H1 (cell line): ENCODE measurements at regions of chr3 and their contacts with region 1.

Region 1: DNA sequence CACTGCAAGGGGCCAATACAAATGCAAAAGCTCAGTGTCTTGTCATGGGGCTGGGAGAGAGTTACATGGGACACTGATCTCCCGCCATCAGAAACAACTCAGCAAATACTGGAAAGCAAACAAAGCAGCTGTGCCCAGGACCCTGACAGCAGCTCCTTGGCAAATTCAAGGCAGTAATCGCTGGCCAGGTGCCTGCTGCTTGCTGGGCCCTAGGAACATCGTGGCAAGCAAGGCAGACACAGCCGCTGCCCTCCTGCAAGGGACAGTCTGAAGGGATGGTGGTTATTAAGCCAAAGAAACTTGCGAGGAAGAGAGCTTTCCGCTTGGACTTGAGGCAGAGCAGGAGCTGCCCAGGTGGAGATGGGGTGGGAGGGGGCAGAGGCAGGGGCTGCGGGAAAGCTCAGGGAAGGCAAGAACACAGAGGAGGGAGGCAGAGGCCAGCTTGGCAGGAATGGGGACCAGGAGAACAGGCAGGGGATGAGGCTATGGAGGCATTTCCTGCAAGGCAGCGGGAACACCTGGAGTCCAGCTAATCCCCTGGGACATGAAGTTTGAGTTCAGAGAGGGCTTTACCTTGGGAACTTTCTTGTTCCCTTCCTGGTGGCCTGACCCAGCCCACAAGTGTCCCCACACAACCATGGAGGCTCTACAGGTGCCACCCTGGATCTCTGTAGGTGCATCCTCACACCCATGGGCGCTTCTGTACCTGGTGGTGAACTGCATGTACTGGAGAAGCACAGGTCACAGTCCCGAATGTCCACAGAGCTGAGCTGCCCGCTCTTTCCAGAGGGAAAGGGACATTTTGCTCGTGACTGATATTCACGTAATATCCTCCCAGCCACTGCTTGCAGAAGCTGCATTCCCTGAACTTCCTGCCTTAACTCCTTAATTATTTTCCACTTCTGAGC is 78.7 kb upstream of the ATP2B2 start:
- DNase-seq: no peak
- H3K4me3 ChIP-seq: no peak overlapping the region
- H3K27ac ChIP-seq: no peak overlapping the region
- H3K4me1 ChIP-seq: no peaks in the 10 kb centered on the region; a peak in 1 of 7 replicates
- H3K27me3 ChIP-seq: no peaks in the 10 kb centered on the region
- CTCF ChIP-seq: no peak
- EP300 ChIP-seq: no peak
- POLR2A ChIP-seq: no peak
- RAD21 ChIP-seq: no peak

Region 2: GRCh38 chr3:10594921-10595320 is 10.9 kb after region 1 on chr3:
- CTCF ChIA-PET with region 1: interaction called, 20 read pairs
- POLR2A ChIA-PET with region 1: no interaction called
- DNase-seq: peak; percentile 57 to 89
- H3K4me3 ChIP-seq: no peak overlapping the region
- H3K27ac ChIP-seq: no peak overlapping the region
- H3K4me1 ChIP-seq: no peaks in the 10 kb centered on the region
- H3K27me3 ChIP-seq: no peaks in the 10 kb centered on the region; a peak in 1 of 7 replicates
- CTCF ChIP-seq: no peak
- EP300 ChIP-seq: no peak
- POLR2A ChIP-seq: no peak
- RAD21 ChIP-seq: no peak